RWPE1 (cell line): ENCODE measurements at regions of chr6 and their contacts with region 1.

Region 1: GRCh38 chr6:30914076-30914853 is at the start of gene VARS2:
- DNase-seq: peak; percentile 96
- H3K27ac ChIP-seq: peak within 1 kb of the TSS; percentile 87
- CTCF ChIP-seq: peak; percentile 76

Region 2: DNA sequence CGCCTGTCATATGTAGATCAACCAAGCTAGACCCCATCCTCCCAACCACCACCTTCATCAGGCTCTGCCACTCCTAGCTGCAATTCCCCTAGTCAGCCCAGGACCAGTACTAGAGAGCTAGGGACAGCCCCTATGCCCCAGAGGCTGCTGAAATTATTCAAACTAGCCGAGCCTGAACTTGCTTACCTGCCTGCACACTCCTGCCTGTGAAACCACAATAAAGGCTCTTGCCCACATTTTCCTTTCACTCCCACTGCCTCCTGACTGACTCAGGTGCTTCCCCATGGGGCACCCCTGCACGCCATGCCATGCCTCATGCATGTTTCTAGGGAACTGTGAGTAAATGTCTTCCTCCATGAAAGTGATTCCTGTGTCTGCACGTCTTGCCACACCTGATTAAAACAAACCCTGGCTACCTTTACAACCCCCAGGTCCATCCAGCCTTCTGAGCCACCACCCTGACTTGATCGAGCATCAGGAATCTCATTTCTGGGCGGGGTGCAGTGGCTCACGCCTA is 103.4 kb before region 1 on chr6:
- CTCF ChIA-PET with region 1: no interaction called
- POLR2A ChIA-PET with region 1: no interaction called
- DNase-seq: peak; percentile 91
- H3K27ac ChIP-seq: peak overlapping the region; percentile 86
- CTCF ChIP-seq: no peak

Region 3: GRCh38 chr6:30821862-30822782 is 92.1 kb before region 1 on chr6:
- CTCF ChIA-PET with region 1: interaction called, 23 read pairs
- POLR2A ChIA-PET with region 1: interaction called, 3 read pairs
- DNase-seq: peak; percentile 39
- H3K27ac ChIP-seq: no peak overlapping the region
- CTCF ChIP-seq: peak; percentile 62

Region 4: DNA sequence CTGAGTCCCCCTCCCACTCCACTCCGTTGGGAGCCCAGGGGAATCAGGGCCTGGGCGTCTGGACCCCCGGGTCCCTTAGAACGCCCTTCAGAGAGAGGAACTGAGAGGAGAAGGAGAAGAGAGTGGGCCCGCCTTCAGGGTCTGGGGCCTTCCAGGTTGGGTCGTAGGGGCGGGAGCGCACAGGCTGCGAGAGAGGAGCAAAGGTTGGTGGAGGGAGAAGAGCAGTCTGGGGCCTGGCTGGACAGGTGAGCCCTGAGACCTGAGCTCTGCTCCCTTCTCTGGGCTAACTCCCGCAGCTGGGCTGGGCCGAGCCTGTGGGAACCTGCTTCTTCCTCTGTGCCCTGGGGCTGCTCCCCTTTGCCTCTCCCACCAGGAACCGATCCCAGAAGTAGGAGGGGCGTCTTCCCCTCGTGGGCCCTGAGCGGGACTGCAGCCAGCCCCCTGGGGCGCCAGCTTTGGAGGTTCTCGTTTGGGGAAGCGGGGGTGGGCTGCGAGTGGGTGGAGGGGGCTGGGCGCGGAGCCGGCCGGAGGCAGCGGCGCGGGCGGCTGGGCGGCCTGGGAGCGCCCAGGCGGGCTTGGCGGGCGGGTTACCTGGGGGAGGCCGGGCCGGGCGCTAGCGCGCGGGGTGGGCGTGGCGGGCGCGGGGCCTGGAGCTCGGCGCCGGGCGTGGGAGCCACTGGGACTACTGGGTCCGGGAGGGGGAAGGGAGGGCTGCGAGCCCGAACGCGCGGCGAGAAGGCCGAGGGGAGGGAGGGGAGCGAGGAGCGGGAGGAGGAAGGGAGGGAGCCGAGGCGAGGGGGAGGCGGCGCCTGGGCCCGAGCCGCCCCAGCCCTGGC is 30.4 kb before region 1 on chr6 and contains the start of gene DDR1:
- CTCF ChIA-PET with region 1: interaction called, 13 read pairs
- POLR2A ChIA-PET with region 1: interaction called, 4 read pairs
- DNase-seq: peak; percentile 90
- H3K27ac ChIP-seq: peak within 1 kb of the TSS; percentile 99
- CTCF ChIP-seq: no peak

Region 5: GRCh38 chr6:31068669-31069340 is 154.5 kb after region 1 on chr6:
- CTCF ChIA-PET with region 1: interaction called, 24 read pairs
- POLR2A ChIA-PET with region 1: interaction called, 3 read pairs
- DNase-seq: peak; percentile 80
- H3K27ac ChIP-seq: no peak overlapping the region
- CTCF ChIP-seq: peak; percentile 91

Region 6: DNA sequence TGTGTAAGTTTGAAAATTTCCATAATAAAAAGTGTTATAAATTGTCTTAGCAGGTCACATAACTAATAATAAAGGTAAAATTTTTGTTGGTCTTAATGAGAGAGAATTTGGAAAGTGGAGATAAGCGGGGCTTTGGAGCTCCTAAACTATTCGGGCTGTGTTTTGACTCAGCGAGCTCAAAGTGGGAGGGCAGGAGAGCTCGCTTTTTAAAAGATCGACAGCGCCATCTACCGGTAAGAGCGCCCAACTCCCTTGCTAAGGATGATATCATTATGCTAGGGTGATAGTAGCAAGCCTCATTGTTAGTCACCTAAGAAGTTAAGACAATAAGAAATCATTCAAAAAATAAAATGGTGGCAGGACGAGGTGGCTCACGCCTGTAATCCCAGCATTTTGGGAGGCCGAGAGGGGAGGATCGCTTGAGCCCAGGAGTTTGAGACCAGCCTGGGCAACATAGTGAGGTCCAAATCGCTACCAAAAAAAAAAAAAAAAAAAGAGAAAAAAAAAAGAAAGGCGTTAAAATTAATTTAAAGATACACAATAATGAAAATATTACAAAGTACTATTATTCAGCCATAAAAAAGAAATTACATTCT is 173.3 kb after region 1 on chr6:
- CTCF ChIA-PET with region 1: interaction called, 10 read pairs
- POLR2A ChIA-PET with region 1: no interaction called
- DNase-seq: peak; percentile 89
- H3K27ac ChIP-seq: no peak overlapping the region
- CTCF ChIP-seq: peak; percentile 76